Tibial artery (tissue), 4 donors: ENCODE measurements at regions of chr14 and their contacts with region 1.

Region 1: DNA sequence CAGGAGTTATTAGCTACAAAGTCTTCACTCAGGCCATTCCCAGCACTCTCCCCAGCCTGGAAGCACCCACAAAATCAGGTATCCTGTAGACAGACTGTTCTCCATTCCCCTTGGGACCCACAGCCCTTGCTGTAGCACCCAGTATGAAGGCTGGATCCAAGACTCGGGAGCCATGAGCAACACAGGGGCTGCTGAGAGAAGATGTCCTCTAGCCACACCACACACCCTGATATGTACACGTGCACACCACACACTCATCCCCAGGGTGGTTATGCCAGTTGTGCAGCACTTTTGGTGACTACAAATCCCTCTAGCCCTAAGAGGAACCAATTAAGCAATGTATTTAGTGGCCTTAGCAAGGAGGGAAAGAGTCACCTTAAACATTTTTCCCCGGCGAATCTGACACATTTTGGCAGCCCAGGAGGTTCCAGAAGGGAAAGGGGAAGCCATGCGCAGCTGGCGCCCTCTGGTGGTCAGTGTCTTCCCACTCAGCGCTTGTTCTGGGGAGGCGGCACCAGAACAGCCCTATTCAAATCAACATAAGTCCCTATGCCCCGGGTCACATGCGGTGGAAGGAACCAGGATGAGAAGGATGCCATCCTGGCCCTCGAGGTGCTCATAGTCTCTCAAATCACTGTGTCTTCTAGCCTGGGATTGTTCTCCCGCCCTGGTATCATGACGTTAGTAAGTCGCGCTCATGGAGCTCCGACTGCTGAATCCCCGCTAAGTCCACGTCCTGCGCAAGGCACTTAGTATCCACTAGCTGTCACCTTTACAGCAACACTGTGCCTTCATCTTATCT is 96.9 kb downstream of the GCH1 start:
- DNase-seq: peak; percentile 82 to 90
- H3K4me3 ChIP-seq: peak overlapping the region in 1 of 2 donors; percentile 7
- H3K27ac ChIP-seq: no peak overlapping the region
- H3K4me1 ChIP-seq: peaks cover 0 to 8% (median 3%) of the 10 kb centered on the region in 4 donors
- H3K27me3 ChIP-seq: no peaks in the 10 kb centered on the region
- CTCF ChIP-seq: peak; percentile 90 to 92

Region 2: GRCh38 chr14:54691525-54692283 is 114.0 kb before region 1 on chr14:
- intact Hi-C with region 1: loop called (anchors 10 kb)
- DNase-seq: peak; percentile 82 to 88
- H3K4me3 ChIP-seq: no peak overlapping the region
- H3K27ac ChIP-seq: peak overlapping the region in 1 of 2 donors; percentile 91
- H3K4me1 ChIP-seq: peaks cover 0 to 62% (median 24%) of the 10 kb centered on the region in 4 donors
- H3K27me3 ChIP-seq: no peaks in the 10 kb centered on the region
- CTCF ChIP-seq: peak; percentile 85

Region 3: DNA sequence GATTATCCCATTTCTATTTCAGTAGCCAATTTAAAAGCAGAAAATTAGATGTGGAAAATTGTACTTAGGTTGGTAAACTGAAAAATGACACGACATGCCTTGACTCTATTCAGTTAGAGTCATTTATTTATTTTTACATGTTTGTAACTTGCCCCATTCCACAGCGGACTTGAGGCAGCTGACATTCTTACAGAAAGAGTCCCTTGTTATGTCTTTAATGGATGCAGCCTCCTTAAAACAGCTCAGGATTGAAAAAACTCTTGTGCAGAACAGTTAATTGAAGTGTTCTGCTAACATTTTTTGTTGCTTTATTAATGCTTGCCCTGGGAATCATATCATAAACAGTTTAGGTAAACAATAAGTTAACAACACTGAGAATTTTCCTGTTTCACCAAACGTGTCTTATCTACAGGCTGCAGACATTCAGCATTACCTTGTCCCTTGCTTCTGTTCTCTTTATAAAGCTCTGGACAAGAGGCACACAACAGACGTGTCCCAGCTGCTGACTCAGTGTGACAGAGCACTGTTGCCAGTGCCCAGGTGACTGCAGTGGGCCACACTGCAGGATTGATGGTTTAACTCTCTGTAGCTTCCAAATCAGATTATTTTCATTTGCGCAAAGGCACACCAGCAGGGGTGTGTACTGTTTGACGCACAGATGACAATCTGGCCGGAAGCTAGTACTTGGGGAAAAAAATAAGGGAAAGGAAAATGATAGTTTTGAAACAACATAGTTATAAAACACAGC is 1414.1 kb after region 1 on chr14:
- intact Hi-C with region 1: no loop called
- DNase-seq: no peak
- H3K4me3 ChIP-seq: no peak overlapping the region
- H3K27ac ChIP-seq: no peak overlapping the region
- H3K4me1 ChIP-seq: peaks cover 0 to 47% (median 18%) of the 10 kb centered on the region in 4 donors
- H3K27me3 ChIP-seq: no peaks in the 10 kb centered on the region
- CTCF ChIP-seq: no peak